ENCODE measurements at regions of chr10 and their contacts with region 1.

Region 1: DNA sequence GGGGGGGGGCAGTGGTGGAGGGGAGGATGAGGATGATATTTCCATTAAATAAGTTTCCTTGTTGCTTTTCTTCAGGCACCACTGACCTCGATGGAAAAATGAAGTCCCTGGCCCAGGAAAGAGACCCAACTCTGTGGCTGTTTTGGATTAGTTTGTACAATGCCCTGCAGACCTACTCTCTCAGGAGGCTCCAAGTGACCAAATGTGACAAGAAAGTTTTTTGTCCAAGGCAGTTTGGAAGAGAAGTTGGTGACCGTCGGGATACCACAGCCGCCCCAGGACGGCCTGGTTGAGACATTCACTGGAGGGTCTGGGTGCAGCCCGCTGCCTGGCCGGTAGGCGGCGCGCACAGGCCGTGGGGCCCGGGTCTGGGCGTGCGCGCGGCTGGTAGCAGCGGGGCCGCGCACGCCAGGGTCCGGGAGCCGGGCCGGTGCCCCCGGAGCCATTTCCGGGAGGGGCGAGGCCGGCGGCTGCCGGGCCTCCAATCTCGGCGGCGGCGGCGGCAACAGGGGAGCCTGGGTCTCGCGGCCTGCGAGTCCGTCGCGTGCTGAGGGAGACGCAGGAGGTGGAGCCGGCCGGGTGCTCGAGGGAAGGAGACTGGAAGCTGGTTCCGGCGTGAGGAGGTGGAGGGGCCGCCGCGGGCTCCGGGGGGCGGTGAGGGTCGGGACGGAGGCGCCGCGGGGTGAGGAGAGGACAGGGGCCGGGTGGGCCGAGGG is at the start of gene SGPL1:
- DNase-seq: peak; percentile 92 to 98
- H3K4me3 ChIP-seq: peak within 1 kb of the TSS; percentile 93
- H3K4me3 Mint-ChIP-seq: peak within 1 kb of the TSS; percentile 96
- H3K27ac Mint-ChIP-seq: peak within 1 kb of the TSS; percentile 89
- H3K4me1 ChIP-seq: peaks cover 5% of the 10 kb centered on the region; the same call in 1 of the 2 replicates
- H3K4me1 Mint-ChIP-seq: peaks cover 7% of the 10 kb centered on the region
- H3K27me3 ChIP-seq: no peaks in the 10 kb centered on the region
- H3K27me3 Mint-ChIP-seq: no peaks in the 10 kb centered on the region
- CTCF ChIP-seq: peak; percentile 99 to 100
- total RNA-seq, gene SGPL1: 121 and 127 TPM in 2 replicates

Region 2: GRCh38 chr10:70693619-70694335 is 121.9 kb before region 1 on chr10:
- CTCF ChIA-PET with region 1: no interaction called
- POLR2A ChIA-PET with region 1: no interaction called
- intact Hi-C with region 1: no loop called
- DNase-seq: no peak
- H3K4me3 ChIP-seq: no peak overlapping the region
- H3K4me3 Mint-ChIP-seq: no peak overlapping the region
- H3K27ac Mint-ChIP-seq: no peak overlapping the region
- H3K4me1 ChIP-seq: no peaks in the 10 kb centered on the region
- H3K4me1 Mint-ChIP-seq: no peaks in the 10 kb centered on the region
- H3K27me3 ChIP-seq: no peaks in the 10 kb centered on the region
- H3K27me3 Mint-ChIP-seq: peaks cover 8% of the 10 kb centered on the region
- CTCF ChIP-seq: no peak

Region 3: DNA sequence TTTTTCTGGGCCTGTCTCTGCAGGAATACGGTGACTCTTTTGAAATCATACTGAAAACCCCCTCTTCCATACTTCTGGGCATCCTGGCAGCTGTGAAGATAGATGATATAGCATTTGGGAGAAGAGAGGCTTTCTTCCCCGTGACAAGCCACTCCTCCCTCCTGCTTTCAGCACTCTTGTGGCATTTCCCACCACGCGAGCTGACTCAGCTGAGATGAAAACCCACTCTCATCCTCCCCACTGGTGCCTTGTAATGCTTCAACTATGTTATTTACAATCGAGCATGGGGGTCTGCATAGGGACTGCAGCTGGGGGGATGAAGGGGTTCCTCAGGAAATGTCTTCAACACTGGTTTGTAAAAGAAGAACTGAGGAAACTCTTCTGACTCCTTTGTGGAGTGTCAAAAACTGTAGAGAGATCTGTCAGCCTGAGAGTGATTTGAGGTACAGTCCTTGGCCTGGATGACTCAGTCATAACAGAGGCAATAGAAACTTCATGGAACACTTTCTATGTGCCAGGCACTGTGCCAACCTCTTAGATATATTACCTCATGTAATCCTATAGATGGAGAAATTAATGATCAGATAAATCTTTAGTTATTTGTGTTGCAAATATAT is 28.8 kb before region 1 on chr10:
- CTCF ChIA-PET with region 1: no interaction called
- POLR2A ChIA-PET with region 1: no interaction called
- intact Hi-C with region 1: no loop called
- DNase-seq: no peak
- H3K4me3 ChIP-seq: no peak overlapping the region
- H3K4me3 Mint-ChIP-seq: no peak overlapping the region
- H3K27ac Mint-ChIP-seq: no peak overlapping the region
- H3K4me1 ChIP-seq: no peaks in the 10 kb centered on the region
- H3K4me1 Mint-ChIP-seq: peaks cover 6% of the 10 kb centered on the region
- H3K27me3 ChIP-seq: 0 out of 2 replicates have a peak, but pooled peaks cover 3% of the 10 kb centered on the region
- H3K27me3 Mint-ChIP-seq: peaks cover 20% of the 10 kb centered on the region
- CTCF ChIP-seq: no peak

Region 4: DNA sequence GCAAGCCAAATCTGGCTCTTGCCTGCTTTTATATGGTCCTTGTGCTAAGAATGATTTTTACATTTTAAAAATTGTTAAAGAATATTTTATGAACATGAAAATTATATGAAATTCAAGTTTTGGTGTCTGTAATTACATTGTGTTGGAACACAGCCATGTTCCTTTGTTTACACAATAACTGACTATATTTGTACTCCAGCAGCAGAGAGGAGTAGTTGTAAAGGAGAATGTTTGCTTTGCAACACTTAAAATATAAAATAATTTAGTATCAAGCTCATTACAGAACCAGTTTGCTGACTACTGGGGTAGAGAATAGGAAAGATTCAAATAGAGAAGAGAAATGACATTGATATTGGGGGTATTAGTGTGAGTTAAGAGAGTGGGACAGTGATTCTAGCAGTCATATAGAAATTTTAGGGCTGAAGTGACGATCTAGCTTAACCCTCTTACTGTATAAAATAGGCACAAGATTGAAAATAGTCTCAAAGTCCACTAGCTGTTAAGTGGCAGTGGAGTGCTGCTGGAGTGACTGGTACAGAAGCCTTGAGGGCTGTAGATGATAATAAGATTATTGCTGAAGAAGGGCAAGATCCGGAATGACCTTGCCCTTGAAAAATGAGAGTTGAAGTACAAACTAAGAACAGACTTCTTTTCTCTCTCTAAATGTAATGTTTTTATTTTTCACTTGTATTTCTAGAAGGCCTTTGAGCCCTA is 28.3 kb after region 1 on chr10:
- CTCF ChIA-PET with region 1: interaction called, 3 read pairs
- POLR2A ChIA-PET with region 1: no interaction called
- intact Hi-C with region 1: loop called (anchors 2 kb)
- DNase-seq: no peak
- H3K4me3 ChIP-seq: no peak overlapping the region
- H3K4me3 Mint-ChIP-seq: no peak overlapping the region
- H3K27ac Mint-ChIP-seq: peak overlapping the region; percentile 70
- H3K4me1 ChIP-seq: peaks cover 54% of the 10 kb centered on the region
- H3K4me1 Mint-ChIP-seq: peaks cover 51% of the 10 kb centered on the region
- H3K27me3 ChIP-seq: no peaks in the 10 kb centered on the region
- H3K27me3 Mint-ChIP-seq: no peaks in the 10 kb centered on the region
- CTCF ChIP-seq: no peak

Region 5: GRCh38 chr10:70880077-70880534 is 64.4 kb after region 1 on chr10:
- CTCF ChIA-PET with region 1: interaction called, 5 read pairs
- POLR2A ChIA-PET with region 1: interaction called, 5 read pairs
- intact Hi-C with region 1: loop called (anchors 1 kb)
- DNase-seq: peak; percentile 87 to 91
- H3K4me3 ChIP-seq: no peak overlapping the region
- H3K4me3 Mint-ChIP-seq: no peak overlapping the region
- H3K27ac Mint-ChIP-seq: no peak overlapping the region
- H3K4me1 ChIP-seq: no peaks in the 10 kb centered on the region
- H3K4me1 Mint-ChIP-seq: no peaks in the 10 kb centered on the region
- H3K27me3 ChIP-seq: no peaks in the 10 kb centered on the region
- H3K27me3 Mint-ChIP-seq: no peaks in the 10 kb centered on the region
- CTCF ChIP-seq: peak; percentile 98

Region 6: DNA sequence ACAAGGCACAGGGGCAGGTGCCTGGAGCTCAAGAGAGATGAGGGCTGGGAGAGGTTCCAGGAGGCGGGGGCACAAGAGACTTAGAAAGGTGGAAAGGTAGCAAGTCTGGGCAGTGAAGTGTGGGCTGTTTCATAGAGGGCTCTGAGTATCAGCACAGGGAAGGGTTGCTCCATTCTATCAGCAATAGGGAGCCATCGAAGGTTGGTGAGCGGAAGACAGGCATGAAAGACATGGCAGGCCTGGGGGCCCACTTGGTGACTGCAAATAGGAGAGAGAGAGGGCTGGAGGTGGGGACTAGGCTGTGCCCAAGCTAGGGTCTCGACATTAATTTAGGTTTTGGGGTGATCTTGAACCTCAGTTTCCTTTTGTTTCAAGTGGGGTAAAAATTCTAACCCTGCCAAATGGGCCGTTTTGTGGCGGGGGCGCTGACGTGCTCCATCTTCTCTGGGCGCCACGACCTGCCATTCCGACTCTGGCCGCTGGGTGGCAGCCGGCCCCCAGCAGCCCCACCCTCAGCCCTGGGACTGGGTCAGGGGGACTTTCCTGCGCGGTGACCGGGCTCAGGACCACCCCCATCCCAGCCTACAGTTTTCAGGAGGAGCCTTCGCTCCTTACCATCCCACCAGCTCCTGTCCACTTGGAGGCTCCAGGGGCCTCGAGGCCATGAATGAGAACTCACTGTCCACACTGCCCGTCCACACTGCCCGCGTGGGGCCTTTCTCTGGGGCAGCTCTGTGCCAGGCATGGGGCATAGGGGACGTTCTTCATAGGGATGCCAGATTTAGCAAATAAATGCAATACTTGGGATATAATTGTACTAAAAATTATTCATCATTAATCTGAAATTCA is 109.9 kb after region 1 on chr10:
- CTCF ChIA-PET with region 1: no interaction called
- POLR2A ChIA-PET with region 1: no interaction called
- intact Hi-C with region 1: no loop called
- DNase-seq: peak in 1 of 2 experiments; percentile 83
- H3K4me3 ChIP-seq: no peak overlapping the region
- H3K4me3 Mint-ChIP-seq: no peak overlapping the region
- H3K27ac Mint-ChIP-seq: no peak overlapping the region
- H3K4me1 ChIP-seq: no peaks in the 10 kb centered on the region
- H3K4me1 Mint-ChIP-seq: peaks cover 8% of the 10 kb centered on the region
- H3K27me3 ChIP-seq: peaks cover 4% of the 10 kb centered on the region; the same call in 1 of the 2 replicates
- H3K27me3 Mint-ChIP-seq: peaks cover 6% of the 10 kb centered on the region
- CTCF ChIP-seq: peak; percentile 99 to 100

Region 7: DNA sequence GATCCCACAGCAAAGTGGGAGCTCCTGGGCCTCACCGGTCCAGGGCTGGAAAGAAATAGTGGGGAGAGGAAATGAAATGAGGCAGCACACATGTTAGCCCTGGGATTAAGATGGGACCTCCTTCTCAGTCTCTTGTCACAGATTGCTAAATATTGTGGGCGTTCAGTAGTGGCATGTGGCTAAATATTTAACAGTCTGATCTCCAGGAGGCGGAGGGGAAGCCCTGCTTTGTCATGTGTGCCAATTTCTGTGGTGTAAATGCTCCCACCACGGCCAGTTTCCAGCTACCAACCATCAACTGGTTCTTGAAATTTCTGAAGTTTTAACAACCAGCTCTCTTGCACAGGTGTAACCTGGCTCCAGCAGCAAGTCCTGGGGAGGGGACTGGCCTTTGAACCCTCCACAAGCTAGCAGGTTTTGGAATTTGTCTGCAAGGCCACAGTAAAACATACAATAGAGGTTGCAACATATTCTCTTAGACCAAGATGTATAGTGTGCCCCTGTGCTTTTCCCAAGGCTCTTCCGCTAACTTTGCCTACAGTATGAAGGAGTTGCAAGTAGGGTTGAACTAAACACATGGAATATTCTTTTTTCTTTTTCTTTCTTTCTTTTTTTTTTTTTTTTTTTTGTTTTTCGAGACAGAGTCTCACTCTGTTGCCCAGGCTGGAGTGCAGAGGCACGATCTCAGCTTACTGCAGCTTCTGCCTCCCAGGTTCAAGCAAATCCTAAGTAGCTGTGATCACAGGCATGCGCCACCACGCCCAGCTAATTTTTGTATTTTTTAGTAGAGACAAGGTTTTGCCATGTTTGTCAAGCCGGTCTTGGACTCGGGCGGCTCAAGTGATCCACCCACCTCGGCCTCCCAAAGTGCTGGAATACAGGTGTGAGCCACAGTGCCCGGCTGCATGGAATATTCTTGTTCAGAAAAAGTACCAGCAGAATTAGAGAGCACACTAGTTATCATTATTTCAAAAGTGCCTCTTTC is 175.8 kb after region 1 on chr10:
- CTCF ChIA-PET with region 1: no interaction called
- POLR2A ChIA-PET with region 1: no interaction called
- intact Hi-C with region 1: loop called (anchors 10 kb)
- DNase-seq: peak; percentile 61 to 73
- H3K4me3 ChIP-seq: no peak overlapping the region
- H3K4me3 Mint-ChIP-seq: no peak overlapping the region
- H3K27ac Mint-ChIP-seq: no peak overlapping the region
- H3K4me1 ChIP-seq: peaks cover 35% of the 10 kb centered on the region
- H3K4me1 Mint-ChIP-seq: peaks cover 14% of the 10 kb centered on the region
- H3K27me3 ChIP-seq: no peaks in the 10 kb centered on the region
- H3K27me3 Mint-ChIP-seq: no peaks in the 10 kb centered on the region
- CTCF ChIP-seq: no peak